ENCODE measurements at regions of chr3 and their contacts with region 1.

Region 1: GRCh38 chr3:160012108-160012507 is 23.5 kb downstream of the IL12A start:
- DNase-seq: no peak
- ATAC-seq: peak; percentile 88
- H3K4me3 Mint-ChIP-seq: peak overlapping the region; percentile 25
- H3K27ac Mint-ChIP-seq: peak overlapping the region; percentile 83
- H3K4me1 Mint-ChIP-seq: peaks cover 42% of the 10 kb centered on the region
- H3K27me3 Mint-ChIP-seq: no peaks in the 10 kb centered on the region
- CTCF ChIP-seq: no peak

Region 2: GRCh38 chr3:158773845-158774830 is 1238.0 kb before region 1 on chr3:
- CTCF ChIA-PET with region 1: no interaction called
- POLR2A ChIA-PET with region 1: interaction called, 14 read pairs
- intact Hi-C with region 1: no loop called
- DNase-seq: no peak
- ATAC-seq: no peak
- H3K4me3 Mint-ChIP-seq: no peak overlapping the region
- H3K27ac Mint-ChIP-seq: no peak overlapping the region
- H3K4me1 Mint-ChIP-seq: no peaks in the 10 kb centered on the region
- H3K27me3 Mint-ChIP-seq: no peaks in the 10 kb centered on the region
- CTCF ChIP-seq: no peak

Measured in activated B cell treated with CpG ODN at 0.5 μM for 24 hours (primary cell).